GM18951 (cell line): ENCODE measurements at regions of chr6 and their contacts with region 1.

Region 1: DNA sequence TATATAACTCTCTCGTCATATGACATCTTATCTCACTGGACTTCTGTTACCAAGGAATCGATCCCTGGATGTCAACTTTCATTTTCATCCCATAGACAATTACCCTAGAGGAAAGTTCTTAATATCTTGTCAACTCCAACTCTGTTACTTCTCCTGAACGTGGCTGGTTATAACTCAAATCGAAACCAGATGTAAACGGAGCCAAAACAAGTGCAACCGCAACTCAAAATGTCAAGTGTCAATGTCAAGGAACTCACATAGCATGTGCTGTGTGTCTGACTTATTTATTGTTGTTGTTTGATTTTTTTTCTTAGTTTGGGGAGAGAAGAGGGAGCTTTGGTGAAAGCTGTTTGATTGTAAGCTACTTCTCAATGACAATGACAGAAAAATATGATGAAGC is 108.6 kb downstream of the VIP start:
- POLR2A ChIP-seq: no peak

Region 2: DNA sequence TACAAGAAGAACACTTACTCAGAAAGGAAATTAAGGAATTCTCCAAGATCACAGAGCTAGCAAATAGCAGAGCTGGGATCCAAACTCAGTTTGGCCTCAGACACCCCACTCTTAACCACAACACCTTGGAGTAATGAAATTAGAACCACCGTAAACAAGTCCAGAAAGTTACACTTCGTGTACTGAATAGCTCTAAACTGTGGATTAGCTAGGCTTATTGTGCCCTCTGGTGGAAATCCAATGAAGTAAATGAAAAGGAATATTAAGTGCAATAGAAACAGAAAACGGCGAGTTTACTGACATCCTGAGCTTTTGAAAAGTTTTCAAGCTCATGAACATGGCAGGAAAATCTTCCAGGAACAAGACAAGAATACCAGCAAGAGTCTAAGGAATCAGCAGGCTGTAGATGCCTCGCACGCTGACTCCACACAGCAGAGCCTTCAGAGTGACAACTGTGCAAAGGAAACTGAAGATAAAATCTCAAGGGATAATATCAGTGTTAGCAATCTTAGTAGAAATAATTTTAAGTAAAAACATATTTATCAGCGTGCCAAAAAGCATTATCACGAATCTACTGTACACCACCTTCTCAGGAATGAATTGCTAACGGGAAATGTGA is 89.0 kb after region 1 on chr6:
- in situ Hi-C with region 1: loop called (anchors 10 kb)
- POLR2A ChIP-seq: no peak

Region 3: DNA sequence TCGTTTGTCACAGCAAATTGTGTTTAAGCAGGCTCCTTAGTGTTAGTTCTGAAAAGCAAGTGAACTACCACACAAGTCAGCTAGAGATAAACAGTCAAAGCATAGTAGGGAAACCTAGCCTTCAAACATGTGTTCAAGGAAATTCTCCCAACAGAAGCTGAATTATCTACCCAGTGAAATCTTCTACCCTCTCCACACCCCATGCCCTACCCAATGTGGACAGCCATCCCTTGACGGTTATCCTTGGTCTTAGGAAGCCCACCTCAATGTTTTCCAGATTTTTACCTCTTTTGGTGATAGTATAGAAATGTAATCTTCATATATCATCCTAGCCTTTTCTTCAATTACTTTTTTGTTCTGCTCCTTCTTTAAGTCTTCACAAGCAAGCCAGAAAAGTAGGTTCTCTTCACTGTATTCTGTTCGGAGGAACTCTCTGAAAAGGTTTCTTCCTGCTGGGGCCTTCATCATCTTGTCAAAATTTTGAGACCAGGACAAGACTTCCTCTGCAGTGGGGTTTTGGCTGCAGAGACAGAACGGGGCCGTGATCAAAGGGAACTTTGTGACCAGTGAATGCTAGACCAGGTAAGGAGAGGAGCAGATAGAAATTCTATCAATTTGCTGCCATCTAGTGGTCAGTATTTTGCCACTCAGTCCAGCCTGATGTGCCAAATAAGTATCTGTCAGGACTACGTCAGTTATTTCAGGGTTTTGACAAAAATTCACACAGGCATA is 164.9 kb after region 1 on chr6:
- in situ Hi-C with region 1: loop called (anchors 10 kb)
- POLR2A ChIP-seq: no peak